Activated B cell treated with CpG ODN at 0.5 μM for 24 hours (primary cell): ENCODE measurements at regions of chr20 and their contacts with region 1.

Region 1: GRCh38 chr20:37345339-37346230 is at the start of gene SRC:
- DNase-seq: peak; percentile 56
- ATAC-seq: peak; percentile 65
- H3K4me3 Mint-ChIP-seq: peak within 1 kb of the TSS; percentile 84
- H3K27ac Mint-ChIP-seq: peak within 1 kb of the TSS; percentile 80
- H3K4me1 Mint-ChIP-seq: peaks cover 54% of the 10 kb centered on the region
- H3K27me3 Mint-ChIP-seq: no peaks in the 10 kb centered on the region
- CTCF ChIP-seq: no peak
- total RNA-seq, gene SRC: 62.9 and 72.7 TPM in 2 replicates

Region 2: DNA sequence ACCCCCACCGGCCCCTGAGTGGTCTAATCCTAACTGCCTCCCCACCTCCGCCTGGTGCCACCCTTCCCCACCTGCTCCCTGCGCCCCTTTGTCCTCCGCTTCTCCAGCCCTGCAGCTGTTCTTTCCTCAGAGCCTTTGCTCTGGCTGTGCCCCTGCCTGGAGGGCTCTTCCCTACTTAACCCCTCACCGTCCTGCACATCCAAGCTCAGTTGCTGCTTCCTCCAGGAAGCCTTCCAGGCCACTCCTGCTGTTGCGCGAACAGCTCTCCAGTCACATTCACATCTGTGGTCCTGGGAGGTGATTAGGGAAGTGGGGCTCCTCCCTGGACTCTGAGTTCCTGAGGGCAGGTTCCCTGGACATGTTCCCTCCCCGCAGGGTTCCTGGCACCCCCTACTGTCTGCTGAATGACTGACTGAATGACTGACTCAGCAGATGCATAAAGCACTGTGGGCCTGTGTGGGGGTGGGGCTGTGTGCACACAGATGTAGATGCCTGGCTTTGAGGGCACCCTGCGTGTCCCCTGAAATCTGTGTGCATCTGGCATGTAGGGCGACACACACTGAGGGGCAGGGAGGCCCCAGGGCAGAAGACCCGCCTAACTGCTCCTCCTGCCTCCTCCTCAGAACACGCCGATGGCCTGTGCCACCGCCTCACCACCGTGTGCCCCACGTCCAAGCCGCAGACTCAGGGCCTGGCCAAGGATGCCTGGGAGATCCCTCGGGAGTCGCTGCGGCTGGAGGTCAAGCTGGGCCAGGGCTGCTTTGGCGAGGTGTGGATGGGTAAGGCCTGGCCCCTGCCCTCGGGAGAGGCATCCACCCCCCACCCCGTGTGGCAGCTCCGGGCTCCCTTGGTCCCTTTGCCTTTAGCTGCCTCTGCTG is 51.7 kb after region 1 on chr20:
- CTCF ChIA-PET with region 1: no interaction called
- POLR2A ChIA-PET with region 1: interaction called, 11 read pairs
- intact Hi-C with region 1: no loop called
- DNase-seq: no peak
- ATAC-seq: no peak
- H3K4me3 Mint-ChIP-seq: no peak overlapping the region
- H3K27ac Mint-ChIP-seq: no peak overlapping the region
- H3K4me1 Mint-ChIP-seq: no peaks in the 10 kb centered on the region
- H3K27me3 Mint-ChIP-seq: no peaks in the 10 kb centered on the region
- CTCF ChIP-seq: no peak